ENCODE measurements at regions of chr22 and their contacts with region 1.

Region 1: DNA sequence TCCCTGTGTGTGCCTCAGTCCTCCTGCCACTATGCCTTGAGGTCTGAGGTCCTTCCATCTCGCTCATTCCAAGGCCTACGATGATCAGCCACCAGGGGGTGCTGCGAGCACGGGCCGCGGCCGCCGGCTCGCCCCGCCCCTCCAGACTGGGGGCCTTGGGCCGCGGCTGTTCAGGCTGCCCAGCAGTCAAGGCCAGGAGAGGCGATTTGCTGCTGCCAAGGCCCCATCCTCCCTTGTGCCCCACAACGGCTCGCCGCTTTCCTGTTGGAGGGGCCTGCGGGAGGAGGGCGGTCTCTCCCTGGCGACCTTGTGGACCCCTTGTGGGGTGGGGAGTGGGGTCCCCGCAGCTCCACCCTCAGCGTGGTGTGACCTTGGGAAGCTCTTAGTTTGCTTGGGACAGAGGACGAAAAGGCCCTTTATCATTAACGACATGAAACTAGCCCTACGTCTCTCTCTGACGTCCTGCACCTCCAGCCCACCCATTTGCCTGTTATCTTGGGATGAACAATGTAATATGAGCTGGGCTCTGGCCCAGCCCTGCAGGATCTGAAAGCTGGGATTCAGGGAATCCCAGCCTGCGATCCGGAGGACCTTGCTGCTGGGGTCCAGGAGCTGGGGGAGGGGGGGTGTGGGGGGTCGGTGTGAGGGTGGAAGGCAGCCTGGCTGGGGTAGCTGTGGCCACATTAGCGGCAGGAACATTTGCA is 5.3 kb upstream of the GALR3 start:
- DNase-seq: peak; percentile 82
- ATAC-seq: peak; percentile 88
- H3K4me3 Mint-ChIP-seq: no peak overlapping the region
- H3K27ac Mint-ChIP-seq: no peak overlapping the region
- H3K4me1 Mint-ChIP-seq: peaks cover 16% of the 10 kb centered on the region
- H3K27me3 Mint-ChIP-seq: peaks cover 28% of the 10 kb centered on the region

Region 2: GRCh38 chr22:37843741-37843990 is 25.8 kb after region 1 on chr22:
- CTCF ChIA-PET with region 1: interaction called, 37 read pairs
- DNase-seq: no peak
- ATAC-seq: peak; percentile 52
- H3K4me3 Mint-ChIP-seq: peak overlapping the region; percentile 92
- H3K27ac Mint-ChIP-seq: peak overlapping the region; percentile 91
- H3K4me1 Mint-ChIP-seq: peaks cover 31% of the 10 kb centered on the region
- H3K27me3 Mint-ChIP-seq: no peaks in the 10 kb centered on the region

Region 3: GRCh38 chr22:37855462-37855861 is 37.6 kb after region 1 on chr22:
- CTCF ChIA-PET with region 1: interaction called, 12 read pairs
- DNase-seq: no peak
- ATAC-seq: no peak
- H3K4me3 Mint-ChIP-seq: no peak overlapping the region
- H3K27ac Mint-ChIP-seq: no peak overlapping the region
- H3K4me1 Mint-ChIP-seq: peaks cover 29% of the 10 kb centered on the region
- H3K27me3 Mint-ChIP-seq: no peaks in the 10 kb centered on the region

Region 4: GRCh38 chr22:37896181-37896592 is 78.3 kb after region 1 on chr22:
- CTCF ChIA-PET with region 1: interaction called, 18 read pairs
- DNase-seq: peak; percentile 80
- ATAC-seq: peak; percentile 99
- H3K4me3 Mint-ChIP-seq: peak overlapping the region; percentile 43
- H3K27ac Mint-ChIP-seq: peak overlapping the region; percentile 95
- H3K4me1 Mint-ChIP-seq: peaks cover 28% of the 10 kb centered on the region
- H3K27me3 Mint-ChIP-seq: no peaks in the 10 kb centered on the region

Region 5: GRCh38 chr22:37999956-38000272 is 182.1 kb after region 1 on chr22:
- CTCF ChIA-PET with region 1: no interaction called
- DNase-seq: no peak
- ATAC-seq: no peak
- H3K4me3 Mint-ChIP-seq: no peak overlapping the region
- H3K27ac Mint-ChIP-seq: no peak overlapping the region
- H3K4me1 Mint-ChIP-seq: peaks cover 4% of the 10 kb centered on the region
- H3K27me3 Mint-ChIP-seq: no peaks in the 10 kb centered on the region

Measured in activated CD8-positive, alpha-beta memory T cell treated with anti-CD3 and anti-CD28 coated beads, Interleukin-2, amount 10 ng/mL, durations not matched to agents 7 days and 5 days (primary cell).